Right ventricle myocardium superior (tissue), 1 donor: ENCODE measurements at regions of chr10 and their contacts with region 1.

Region 1: DNA sequence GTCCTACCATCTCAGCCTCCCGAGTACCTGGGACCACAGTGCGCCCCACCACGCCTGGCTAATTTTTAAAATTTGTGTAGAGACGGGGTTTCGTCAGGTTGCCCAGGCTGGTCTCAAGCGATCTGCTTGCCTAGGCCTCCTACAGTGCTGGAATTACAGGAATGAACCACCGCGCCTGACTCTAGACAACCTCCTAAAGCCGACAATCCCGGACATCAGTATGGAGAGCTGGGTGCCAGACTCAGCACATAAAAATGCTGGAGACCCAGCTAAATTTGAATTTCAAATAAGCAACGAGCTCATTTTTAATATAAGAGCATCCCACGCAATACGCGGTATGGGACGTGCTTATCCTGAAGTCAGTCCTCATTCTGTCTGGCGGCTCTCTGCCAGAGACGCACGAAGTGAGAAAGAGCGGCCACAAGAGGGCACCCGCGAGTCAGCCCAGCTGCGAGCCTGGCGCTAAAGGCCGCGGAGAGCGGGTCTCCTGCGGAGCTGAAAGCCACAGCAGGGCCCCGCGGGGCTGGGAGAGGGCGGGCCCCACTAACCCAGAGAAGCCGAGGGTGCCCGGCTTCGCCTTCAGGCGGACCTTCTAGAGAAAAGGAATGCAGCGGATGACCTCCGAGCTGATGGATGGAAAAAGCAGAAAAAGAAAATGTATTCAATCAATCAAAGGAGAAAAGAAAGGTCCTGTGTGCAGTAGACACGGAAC is 7.0 kb downstream of the CALY start:
- DNase-seq: peak; percentile 92
- ATAC-seq: peak; percentile 89

Region 2: GRCh38 chr10:133608855-133609254 is 279.2 kb after region 1 on chr10:
- intact Hi-C with region 1: loop called (anchors 5 kb)
- DNase-seq: no peak
- ATAC-seq: no peak